Posterior vena cava (tissue), 2 donors: ENCODE measurements at regions of chr4 and their contacts with region 1.

Region 1: GRCh38 chr4:153115322-153116290 is 88.6 kb upstream of the TRIM2 start:
- DNase-seq: peak; percentile 75

Region 2: DNA sequence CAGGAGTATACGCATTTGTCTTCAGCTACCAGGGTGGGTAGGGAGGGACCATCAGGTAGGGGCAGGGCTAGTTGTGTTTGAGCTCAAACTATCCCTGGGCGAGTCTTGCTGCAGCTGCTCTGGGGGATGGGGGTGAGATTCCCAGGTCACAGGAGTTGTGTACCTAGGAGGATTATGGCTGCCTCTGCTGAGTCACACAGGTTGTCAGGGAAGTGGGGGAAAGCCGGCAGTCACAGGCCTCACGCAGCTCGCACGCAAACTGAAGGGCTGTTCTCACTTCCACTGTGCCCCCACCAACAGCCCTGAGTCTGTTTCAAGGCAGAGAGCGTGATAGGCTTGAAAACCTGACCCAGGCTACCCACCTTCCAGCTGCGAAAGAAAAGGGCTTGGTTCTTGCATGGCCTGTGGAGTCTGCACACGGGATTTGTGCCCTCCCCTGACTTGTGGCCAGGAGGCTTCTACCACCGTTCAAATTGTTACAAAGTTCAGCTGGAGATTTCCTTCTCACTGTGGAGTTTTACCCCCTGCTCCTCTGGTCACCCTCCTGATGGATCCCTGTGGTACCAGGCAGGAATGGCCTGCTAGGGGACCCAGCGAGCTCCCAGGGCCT is 272.0 kb before region 1 on chr4:
- intact Hi-C with region 1: loop called in 1 of 2 experiments (anchors 10 kb)
- DNase-seq: no peak